HCT116 (cell line): ENCODE measurements at regions of chr12 and their contacts with region 1.

Region 1: DNA sequence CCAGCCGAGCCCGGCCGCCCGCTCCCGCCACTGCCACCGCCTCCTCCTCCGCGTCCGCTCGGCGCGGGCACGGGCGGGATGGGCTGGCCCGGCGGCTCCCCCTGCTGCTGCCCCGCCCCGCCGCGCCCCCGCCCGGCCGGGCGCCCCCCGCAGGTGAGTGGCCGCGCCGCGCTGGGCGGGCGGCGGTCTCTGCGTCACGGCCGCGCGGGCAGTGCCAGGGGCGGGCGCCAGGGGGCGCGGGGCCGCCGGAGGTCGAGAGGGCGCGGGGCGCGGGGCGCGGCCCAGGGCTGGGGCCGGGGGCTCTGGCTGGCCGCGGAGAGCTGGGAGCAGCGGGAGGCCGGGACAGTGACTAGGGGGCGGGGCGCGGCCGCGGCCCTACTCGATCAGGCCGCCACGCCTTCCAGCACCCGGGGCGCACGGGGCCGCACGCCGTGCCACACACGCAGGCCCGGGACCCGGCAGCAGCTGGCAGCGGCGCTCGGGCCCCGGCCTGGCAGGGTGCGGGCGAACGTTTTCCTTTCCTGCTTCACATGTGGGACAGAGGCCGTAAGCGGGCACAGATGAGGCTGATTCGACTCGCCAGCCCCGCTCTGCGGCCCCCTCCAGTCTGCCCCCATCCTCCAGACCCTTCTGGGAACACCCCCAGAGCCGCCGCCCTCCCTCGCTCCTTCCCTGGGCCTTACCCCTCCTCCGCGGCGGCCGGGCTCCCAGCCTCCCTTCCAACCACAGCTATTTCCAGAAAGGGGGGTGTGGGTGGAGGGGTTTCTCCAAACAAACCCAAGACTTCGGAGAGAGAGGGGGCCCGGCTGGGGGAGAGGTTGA is 2.4 kb upstream of the TNS2 start:
- DNase-seq: no peak
- ATAC-seq: peak; percentile 60
- H3K4me3 ChIP-seq: peak overlapping the region; percentile 81 to 83
- H3K27ac ChIP-seq: peak overlapping the region; percentile 97
- H3K4me1 ChIP-seq: peaks cover 66 to 89% of the 10 kb centered on the region in 2 experiments
- H3K27me3 ChIP-seq: no peaks in the 10 kb centered on the region
- CTCF ChIP-seq: no peak
- POLR2A ChIP-seq: peak; percentile 24
- RAD21 ChIP-seq: no peak

Region 2: DNA sequence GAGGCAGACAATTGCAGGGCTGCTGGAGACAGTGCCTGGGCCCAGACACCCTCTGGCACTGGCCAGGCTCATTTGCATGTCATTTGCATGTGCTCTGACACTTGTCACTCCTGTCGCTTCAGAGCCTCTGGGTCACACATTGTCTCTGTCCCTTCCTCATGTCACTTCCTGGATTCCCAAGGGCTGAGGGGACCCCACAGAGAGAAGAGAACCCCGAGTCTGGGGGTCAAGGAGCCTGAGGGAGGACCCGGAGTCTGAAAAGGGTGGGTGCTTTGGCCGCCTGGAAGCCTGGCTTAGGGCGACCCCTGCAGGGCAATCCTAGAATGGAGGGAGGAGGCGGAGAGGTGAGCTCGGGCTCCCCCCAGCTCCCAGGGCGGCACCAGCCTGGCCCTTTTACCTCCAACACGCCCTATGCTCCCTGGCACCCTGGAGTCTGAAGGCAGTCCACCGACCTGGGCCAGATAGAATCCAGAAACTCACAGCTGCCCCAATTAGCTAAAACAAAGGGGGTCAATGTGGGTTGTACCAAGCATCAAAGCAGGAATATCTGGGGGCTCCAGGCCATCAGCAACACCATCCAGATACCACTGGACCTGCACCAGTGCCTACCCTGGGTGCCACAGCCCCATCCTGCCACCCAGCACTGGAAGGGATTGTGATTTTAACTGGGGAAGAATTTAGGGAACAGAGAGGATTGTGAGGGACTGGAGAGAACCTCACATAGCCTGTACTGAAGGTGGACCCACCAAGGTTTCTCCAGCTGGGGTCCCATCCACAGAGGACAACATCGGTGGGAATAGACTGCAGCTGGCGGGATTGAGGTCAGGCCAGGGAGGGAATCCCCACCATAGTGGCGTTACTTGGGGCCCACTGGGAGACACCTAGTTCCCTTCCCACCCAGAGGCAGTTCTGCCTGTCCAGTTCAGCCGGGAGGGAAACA is 176.8 kb before region 1 on chr12:
- CTCF ChIA-PET with region 1: no interaction called
- POLR2A ChIA-PET with region 1: no interaction called
- RAD21 ChIA-PET with region 1: no interaction called
- intact Hi-C with region 1: no loop called
- DNase-seq: no peak
- ATAC-seq: peak; percentile 71
- H3K4me3 ChIP-seq: 0 out of 4 replicates have a peak overlapping the region, but pooled peaks of 1 of the 2 experiments have one; percentile 16
- H3K27ac ChIP-seq: peak overlapping the region; percentile 81
- H3K4me1 ChIP-seq: peaks cover 48 to 64% of the 10 kb centered on the region in 2 experiments
- H3K27me3 ChIP-seq: no peaks in the 10 kb centered on the region
- CTCF ChIP-seq: peak in 2 of 3 experiments; percentile 89 to 96; a peak in 4 of 6 replicates
- POLR2A ChIP-seq: no peak
- RAD21 ChIP-seq: no peak

Region 3: DNA sequence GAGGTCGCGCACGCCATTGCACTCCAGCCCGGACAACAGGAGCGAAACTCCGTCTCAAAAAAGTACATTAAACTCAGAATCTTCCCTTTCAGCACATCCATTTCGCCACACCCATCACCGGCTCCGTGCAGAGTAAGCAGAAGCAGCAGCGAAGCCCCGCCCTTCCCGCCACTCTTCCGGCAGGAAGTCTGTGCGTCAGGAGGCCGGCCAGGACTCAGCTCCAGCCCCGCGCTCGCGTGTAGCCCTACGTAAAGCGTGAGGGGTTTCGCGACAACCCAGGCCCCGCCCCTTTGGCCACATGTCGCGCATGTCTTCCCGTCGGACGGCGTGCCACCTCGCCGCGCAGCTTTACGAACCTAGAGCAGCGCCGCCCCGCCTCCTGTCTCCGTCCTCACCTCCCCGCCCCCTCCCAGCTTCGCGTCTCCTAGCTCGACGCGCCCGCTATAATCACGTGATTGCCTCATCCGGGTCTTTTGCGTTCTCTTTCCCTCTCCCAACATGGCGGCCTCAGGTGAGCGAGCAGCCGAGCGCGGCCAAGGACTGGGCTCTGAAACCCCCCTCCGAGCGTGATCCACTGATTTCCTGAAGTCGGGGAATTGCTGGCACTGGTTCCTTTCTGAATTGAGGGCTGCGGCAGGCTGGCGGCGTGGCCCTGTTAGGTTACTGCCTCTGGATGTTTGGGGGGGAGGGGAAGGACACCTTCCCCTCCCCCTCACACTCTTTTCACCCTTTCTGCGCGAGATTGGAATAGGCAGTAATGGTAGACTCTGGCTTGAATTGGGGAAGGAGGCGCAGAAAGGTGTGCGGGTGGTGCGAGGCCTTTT is 41.2 kb before region 1 on chr12 and contains the start of gene EIF4B:
- CTCF ChIA-PET with region 1: interaction called, 9 read pairs
- POLR2A ChIA-PET with region 1: interaction called, 12 read pairs
- RAD21 ChIA-PET with region 1: interaction called in 1 of 2 experiments, 4 read pairs
- intact Hi-C with region 1: loop called (anchors 5 kb)
- DNase-seq: peak; percentile 99
- ATAC-seq: peak; percentile 90
- H3K4me3 ChIP-seq: peak within 1 kb of the TSS; percentile 98
- H3K27ac ChIP-seq: peak within 1 kb of the TSS; percentile 98
- H3K4me1 ChIP-seq: peaks cover 18 to 45% of the 10 kb centered on the region in 2 experiments
- H3K27me3 ChIP-seq: no peaks in the 10 kb centered on the region
- CTCF ChIP-seq: no peak
- POLR2A ChIP-seq: peak; percentile 45
- RAD21 ChIP-seq: no peak
- total RNA-seq, gene EIF4B: 809 TPM

Region 4: DNA sequence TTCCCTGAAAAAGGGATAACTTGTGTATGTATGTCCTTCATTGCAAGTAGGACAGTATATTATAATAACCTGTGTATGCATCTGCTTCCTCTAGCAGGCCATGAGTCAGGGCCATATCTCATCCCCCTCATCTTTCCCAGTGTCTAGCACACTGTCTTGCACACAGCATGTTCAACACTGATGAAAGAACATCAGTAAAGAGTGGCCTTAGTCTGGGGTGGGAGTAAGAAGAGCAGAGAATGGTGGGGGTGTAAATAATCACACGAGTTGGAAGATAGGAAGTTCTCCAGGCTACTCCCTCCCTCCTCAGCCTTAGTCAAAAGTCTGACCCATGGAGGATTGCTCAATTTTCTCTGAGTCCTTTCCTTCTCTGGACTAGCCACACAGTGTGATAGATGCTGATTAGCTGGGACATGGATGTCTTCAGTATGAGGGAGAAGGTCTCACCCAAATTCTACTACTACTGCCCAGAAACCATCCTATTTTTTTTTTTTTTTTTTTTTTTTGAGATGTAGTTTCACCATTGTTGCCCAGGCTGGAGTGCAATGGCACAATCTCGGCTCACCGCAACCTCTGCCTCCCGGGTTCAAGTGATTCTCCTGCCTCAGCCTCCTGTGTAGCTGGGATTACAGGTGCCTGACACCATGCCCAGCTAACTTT is 317.9 kb after region 1 on chr12:
- CTCF ChIA-PET with region 1: no interaction called
- POLR2A ChIA-PET with region 1: no interaction called
- RAD21 ChIA-PET with region 1: no interaction called
- intact Hi-C with region 1: loop called (anchors 5 kb)
- DNase-seq: no peak
- ATAC-seq: peak; percentile 13; the same call in 1 of the 2 replicates
- H3K4me3 ChIP-seq: peak overlapping the region in 1 of 2 experiments; percentile 19; a peak in 2 of 4 replicates
- H3K27ac ChIP-seq: peak overlapping the region; percentile 98
- H3K4me1 ChIP-seq: peaks cover 60 to 79% of the 10 kb centered on the region in 2 experiments
- H3K27me3 ChIP-seq: no peaks in the 10 kb centered on the region
- CTCF ChIP-seq: no peak
- POLR2A ChIP-seq: no peak
- RAD21 ChIP-seq: no peak

Region 5: DNA sequence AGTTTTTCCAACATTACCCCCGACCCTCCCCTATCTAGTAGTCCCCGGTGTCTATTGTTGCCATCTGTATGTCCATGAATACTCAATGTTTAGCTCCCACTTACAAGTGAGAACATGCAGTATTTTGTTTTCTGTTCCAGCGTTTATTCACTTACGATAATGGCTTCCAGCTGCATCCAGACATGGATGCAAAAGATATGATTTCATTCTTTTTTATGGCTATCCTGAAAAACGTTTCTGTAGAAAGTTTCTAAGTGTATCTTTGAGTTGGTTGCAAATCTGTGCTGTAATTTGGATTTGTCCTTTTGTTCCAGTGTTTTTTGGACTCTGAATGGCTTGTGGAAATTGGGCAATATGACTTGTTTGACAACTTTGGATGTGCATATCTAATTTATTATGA is 344.3 kb after region 1 on chr12:
- CTCF ChIA-PET with region 1: no interaction called
- POLR2A ChIA-PET with region 1: no interaction called
- RAD21 ChIA-PET with region 1: no interaction called
- intact Hi-C with region 1: no loop called
- DNase-seq: no peak
- ATAC-seq: no peak
- H3K4me3 ChIP-seq: no peak overlapping the region
- H3K27ac ChIP-seq: no peak overlapping the region
- H3K4me1 ChIP-seq: no peaks in the 10 kb centered on the region
- H3K27me3 ChIP-seq: no peaks in the 10 kb centered on the region
- CTCF ChIP-seq: no peak
- POLR2A ChIP-seq: no peak
- RAD21 ChIP-seq: no peak